Naive thymus-derived CD4-positive, alpha-beta T cell (primary cell): ENCODE measurements at regions of chr15 and their contacts with region 1.

Region 1: GRCh38 chr15:85296615-85297402 is 83.6 kb upstream of the AKAP13 start:
- DNase-seq: peak; percentile 19 to 79 (median 71)
- ATAC-seq: peak; percentile 98
- H3K4me3 ChIP-seq: peak overlapping the region; percentile 20
- H3K4me3 Mint-ChIP-seq: peak overlapping the region; percentile 5 to 78 (median 60)
- H3K27ac ChIP-seq: no peak overlapping the region
- H3K27ac Mint-ChIP-seq: peak overlapping the region in 2 of 9 donors; percentile 12 to 62
- H3K4me1 ChIP-seq: no peaks in the 10 kb centered on the region
- H3K4me1 Mint-ChIP-seq: peaks cover 7 to 22% (median 14%) of the 10 kb centered on the region in 7 donors
- H3K27me3 ChIP-seq: no peaks in the 10 kb centered on the region
- H3K27me3 Mint-ChIP-seq: peaks cover 0 to 1% (median 0%) of the 10 kb centered on the region in 5 donors

Region 2: DNA sequence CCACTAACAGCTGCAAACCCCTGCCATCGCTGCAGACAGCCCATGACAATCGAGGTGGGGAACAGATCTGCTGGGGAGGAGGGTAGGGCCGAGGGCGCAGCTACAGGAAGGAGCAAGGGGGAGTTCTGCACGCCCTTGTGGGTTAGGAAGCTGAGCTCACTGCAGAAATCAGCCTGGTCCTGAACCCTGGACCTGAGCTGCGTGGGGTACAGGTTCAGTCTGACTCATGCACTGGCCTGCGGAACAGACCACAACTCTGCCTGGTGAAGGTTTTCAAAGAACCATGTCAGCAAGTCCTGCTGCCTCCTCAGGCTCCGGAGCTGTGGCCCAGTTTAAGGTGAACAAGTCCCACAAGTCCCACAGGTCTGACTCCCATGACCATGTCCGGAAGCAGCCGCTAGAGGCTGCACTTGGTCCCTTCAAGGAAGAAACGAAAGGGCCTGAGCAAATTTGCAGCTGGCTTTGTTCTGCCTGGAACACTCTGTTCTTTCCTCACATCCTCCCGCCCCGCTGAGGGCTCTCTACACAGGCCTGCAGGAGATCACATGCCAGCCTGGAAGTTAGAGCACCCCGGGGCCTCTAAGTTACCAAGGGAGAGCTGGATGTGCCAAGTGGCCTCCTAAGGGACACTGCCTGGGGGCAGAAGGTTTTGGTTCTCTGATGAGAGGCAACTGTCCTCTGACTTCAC is 34.2 kb after region 1 on chr15:
- CTCF ChIA-PET with region 1: interaction called, 7 read pairs
- POLR2A ChIA-PET with region 1: no interaction called
- intact Hi-C with region 1: loop called (anchors 1 kb)
- DNase-seq: peak; percentile 12 to 71 (median 44)
- ATAC-seq: peak; percentile 70
- H3K4me3 ChIP-seq: peak overlapping the region; percentile 57
- H3K4me3 Mint-ChIP-seq: peak overlapping the region; percentile 88 to 100 (median 96)
- H3K27ac ChIP-seq: peak overlapping the region; percentile 65
- H3K27ac Mint-ChIP-seq: peak overlapping the region; percentile 74 to 97 (median 95)
- H3K4me1 ChIP-seq: peaks cover 18 to 24% of the 10 kb centered on the region in 2 donors
- H3K4me1 Mint-ChIP-seq: peaks cover 34 to 54% (median 47%) of the 10 kb centered on the region in 7 donors
- H3K27me3 ChIP-seq: no peaks in the 10 kb centered on the region
- H3K27me3 Mint-ChIP-seq: no peaks in the 10 kb centered on the region

Region 3: DNA sequence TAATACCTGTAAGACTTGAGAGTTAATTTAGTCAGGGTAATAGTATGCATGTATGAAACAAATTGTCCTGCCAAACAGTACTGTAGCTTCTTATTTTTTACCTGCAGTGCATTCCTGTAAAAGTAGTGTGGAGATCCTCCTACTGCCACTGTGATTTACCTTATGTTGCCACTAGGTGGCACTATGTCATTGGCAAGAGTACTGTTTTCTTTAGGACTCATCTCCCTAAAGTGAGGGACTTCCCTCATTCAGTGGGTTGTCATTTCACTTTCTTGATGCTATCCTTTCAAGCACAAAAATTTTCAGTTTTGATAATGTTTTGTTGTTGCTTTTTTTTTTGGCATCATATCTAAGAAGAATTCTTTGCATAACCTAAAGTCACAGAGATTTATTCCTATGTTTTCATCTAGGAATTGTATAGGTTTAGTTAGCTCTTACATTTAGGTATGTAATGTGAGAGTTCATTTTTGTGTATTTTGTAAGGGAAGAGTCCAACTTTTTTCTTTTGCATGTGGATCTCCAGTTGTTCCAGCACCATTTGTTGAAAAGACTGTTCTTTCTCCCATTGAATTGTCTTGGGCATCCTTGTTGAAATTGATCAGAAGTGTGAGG is 189.3 kb after region 1 on chr15:
- CTCF ChIA-PET with region 1: interaction called, 5 read pairs
- POLR2A ChIA-PET with region 1: no interaction called
- intact Hi-C with region 1: loop called (anchors 1 to 5 kb)
- DNase-seq: peak in 8 of 9 donors; percentile 50 to 73 (median 66)
- ATAC-seq: peak; percentile 96
- H3K4me3 ChIP-seq: no peak overlapping the region
- H3K4me3 Mint-ChIP-seq: no peak overlapping the region
- H3K27ac ChIP-seq: no peak overlapping the region
- H3K27ac Mint-ChIP-seq: peak overlapping the region in 4 of 9 donors; percentile 2 to 73 (median 56)
- H3K4me1 ChIP-seq: peaks cover 16 to 17% of the 10 kb centered on the region in 2 donors
- H3K4me1 Mint-ChIP-seq: peaks cover 45 to 84% (median 70%) of the 10 kb centered on the region in 7 donors
- H3K27me3 ChIP-seq: no peaks in the 10 kb centered on the region
- H3K27me3 Mint-ChIP-seq: no peaks in the 10 kb centered on the region

Region 4: DNA sequence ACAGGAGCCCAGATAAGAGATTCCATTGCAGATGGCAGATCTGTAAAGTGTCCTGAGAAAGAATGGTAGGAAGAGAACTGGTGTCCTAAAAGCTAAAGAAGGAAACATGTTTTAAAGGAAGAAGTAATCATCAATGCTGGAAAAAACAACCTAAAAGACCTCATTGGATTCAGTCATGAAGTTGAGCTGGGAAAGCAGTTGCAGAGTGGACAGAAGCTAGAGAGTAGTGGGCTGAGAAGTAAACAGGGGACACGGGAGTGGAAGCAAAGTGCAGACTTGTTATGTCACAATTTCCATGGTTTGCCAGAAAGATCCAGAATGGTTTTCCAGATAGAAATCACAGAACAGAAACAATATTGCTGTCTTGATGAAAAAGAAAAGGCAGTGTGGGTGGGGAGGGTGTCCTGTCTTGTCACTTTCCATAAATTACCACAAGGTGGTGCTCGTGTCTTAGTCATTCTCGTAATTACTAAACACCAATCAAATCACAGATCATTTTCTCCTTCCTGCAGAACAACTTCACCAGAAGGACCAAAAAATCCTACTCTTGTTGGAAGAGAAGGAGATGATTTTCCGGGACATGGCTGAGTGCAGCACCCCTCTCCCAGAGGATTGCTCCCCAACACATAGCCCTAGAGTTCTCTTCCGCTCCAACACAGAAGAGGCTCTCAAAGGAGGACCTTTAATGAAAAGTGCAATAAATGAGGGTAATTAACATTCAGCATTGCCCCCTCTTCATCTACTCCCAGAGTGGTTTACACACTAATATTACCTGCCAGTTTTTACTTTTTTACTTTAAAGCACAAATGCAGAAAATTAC is 433.4 kb after region 1 on chr15:
- CTCF ChIA-PET with region 1: no interaction called
- POLR2A ChIA-PET with region 1: no interaction called
- intact Hi-C with region 1: loop called in 1 of 2 experiments (anchors 5 kb)
- DNase-seq: peak in 7 of 9 donors; percentile 48 to 72 (median 62)
- ATAC-seq: peak; percentile 90
- H3K4me3 ChIP-seq: no peak overlapping the region
- H3K4me3 Mint-ChIP-seq: no peak overlapping the region
- H3K27ac ChIP-seq: no peak overlapping the region
- H3K27ac Mint-ChIP-seq: peak overlapping the region; percentile 7 to 88 (median 47)
- H3K4me1 ChIP-seq: no peaks in the 10 kb centered on the region
- H3K4me1 Mint-ChIP-seq: peaks cover 0 to 28% (median 14%) of the 10 kb centered on the region in 7 donors
- H3K27me3 ChIP-seq: no peaks in the 10 kb centered on the region
- H3K27me3 Mint-ChIP-seq: no peaks in the 10 kb centered on the region

Region 5: GRCh38 chr15:85840065-85840801 is 543.4 kb after region 1 on chr15:
- CTCF ChIA-PET with region 1: interaction called, 4 read pairs
- POLR2A ChIA-PET with region 1: no interaction called
- intact Hi-C with region 1: loop called (anchors 5 to 10 kb)
- DNase-seq: peak; percentile 55 to 87 (median 75)
- ATAC-seq: peak; percentile 95
- H3K4me3 ChIP-seq: peak overlapping the region; percentile 36
- H3K4me3 Mint-ChIP-seq: peak overlapping the region; percentile 34 to 82 (median 71)
- H3K27ac ChIP-seq: no peak overlapping the region
- H3K27ac Mint-ChIP-seq: peak overlapping the region in 1 of 9 donors; percentile 36
- H3K4me1 ChIP-seq: peaks cover 0 to 3% of the 10 kb centered on the region in 2 donors
- H3K4me1 Mint-ChIP-seq: peaks cover 2 to 9% (median 6%) of the 10 kb centered on the region in 7 donors
- H3K27me3 ChIP-seq: no peaks in the 10 kb centered on the region
- H3K27me3 Mint-ChIP-seq: peaks cover 0 to 9% (median 6%) of the 10 kb centered on the region in 5 donors

Region 6: DNA sequence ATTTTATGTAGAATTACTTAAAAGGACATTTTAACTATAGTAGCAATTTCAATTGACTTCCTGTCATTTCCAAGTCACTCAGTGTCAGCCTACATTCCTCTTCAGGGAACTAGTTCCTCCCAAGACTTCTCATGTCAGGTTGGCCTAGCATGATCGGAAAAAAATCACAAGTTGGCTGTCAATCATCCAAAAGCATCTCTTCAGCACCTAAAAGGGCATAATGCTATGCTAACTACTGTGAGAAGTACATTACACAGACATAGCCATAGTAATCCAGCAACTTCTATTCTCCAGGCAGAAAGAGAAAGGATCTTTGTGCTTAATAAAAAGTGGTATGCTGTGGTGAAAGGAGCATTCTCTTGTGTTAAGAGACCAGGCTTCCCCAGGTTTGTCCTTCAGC is 1676.6 kb after region 1 on chr15:
- CTCF ChIA-PET with region 1: no interaction called
- POLR2A ChIA-PET with region 1: no interaction called
- intact Hi-C with region 1: no loop called
- DNase-seq: no peak
- ATAC-seq: no peak
- H3K4me3 ChIP-seq: no peak overlapping the region
- H3K4me3 Mint-ChIP-seq: no peak overlapping the region
- H3K27ac ChIP-seq: no peak overlapping the region
- H3K27ac Mint-ChIP-seq: no peak overlapping the region
- H3K4me1 ChIP-seq: no peaks in the 10 kb centered on the region
- H3K4me1 Mint-ChIP-seq: no peaks in the 10 kb centered on the region
- H3K27me3 ChIP-seq: no peaks in the 10 kb centered on the region
- H3K27me3 Mint-ChIP-seq: peaks cover 0 to 12% (median 0%) of the 10 kb centered on the region in 5 donors